ENCODE measurements at regions of chr3 and their contacts with region 1.

Region 1: GRCh38 chr3:130892759-130893375 is 1.0 kb upstream of the ATP2C1 start:
- DNase-seq: peak in 2 of 3 donors; percentile 36 to 69
- ATAC-seq: peak; percentile 65 to 70 (median 68)
- H3K4me3 ChIP-seq: peak overlapping the region; percentile 62 to 84 (median 80)
- H3K27ac ChIP-seq: peak overlapping the region; percentile 93 to 96 (median 95)
- H3K4me1 ChIP-seq: peaks cover 0 to 7% (median 0%) of the 10 kb centered on the region in 4 donors
- H3K27me3 ChIP-seq: no peaks in the 10 kb centered on the region
- CTCF ChIP-seq: peak; percentile 75 to 91 (median 79)
- POLR2A ChIP-seq: no peak

Region 2: GRCh38 chr3:130759699-130760338 is 133.0 kb before region 1 on chr3:
- intact Hi-C with region 1: loop called (anchors 10 kb)
- DNase-seq: peak in 2 of 3 donors; percentile 22 to 56
- ATAC-seq: peak; percentile 87 to 97 (median 92)
- H3K4me3 ChIP-seq: no peak overlapping the region
- H3K27ac ChIP-seq: no peak overlapping the region
- H3K4me1 ChIP-seq: no peaks in the 10 kb centered on the region
- H3K27me3 ChIP-seq: no peaks in the 10 kb centered on the region
- CTCF ChIP-seq: peak; percentile 74 to 89 (median 86)
- POLR2A ChIP-seq: no peak

Region 3: GRCh38 chr3:131020122-131020693 is 127.3 kb after region 1 on chr3:
- intact Hi-C with region 1: no loop called
- DNase-seq: no peak
- ATAC-seq: peak in 2 of 4 donors; percentile 29 to 32
- H3K4me3 ChIP-seq: no peak overlapping the region
- H3K27ac ChIP-seq: no peak overlapping the region
- H3K4me1 ChIP-seq: peaks cover 0 to 4% (median 0%) of the 10 kb centered on the region in 4 donors
- H3K27me3 ChIP-seq: no peaks in the 10 kb centered on the region
- CTCF ChIP-seq: no peak
- POLR2A ChIP-seq: no peak

Measured in right lobe of liver (tissue), 6 donors.